ENCODE measurements at regions of chr1 and their contacts with region 1.

Region 1: GRCh38 chr1:167715157-167715999 is 6.4 kb upstream of the MPZL1 start:
- DNase-seq: peak; percentile 75 to 94 (median 78)
- ATAC-seq: peak; percentile 65
- H3K4me3 ChIP-seq: peak overlapping the region; percentile 66
- H3K27ac ChIP-seq: peak overlapping the region; percentile 99
- H3K4me1 ChIP-seq: peaks cover 21 to 22% of the 10 kb centered on the region in 2 experiments
- H3K27me3 ChIP-seq: no peaks in the 10 kb centered on the region
- CTCF ChIP-seq: peak; percentile 87 to 98 (median 97)
- EP300 ChIP-seq: peak; percentile 86
- POLR2A ChIP-seq: no peak
- RAD21 ChIP-seq: peak; percentile 48 to 60

Region 2: DNA sequence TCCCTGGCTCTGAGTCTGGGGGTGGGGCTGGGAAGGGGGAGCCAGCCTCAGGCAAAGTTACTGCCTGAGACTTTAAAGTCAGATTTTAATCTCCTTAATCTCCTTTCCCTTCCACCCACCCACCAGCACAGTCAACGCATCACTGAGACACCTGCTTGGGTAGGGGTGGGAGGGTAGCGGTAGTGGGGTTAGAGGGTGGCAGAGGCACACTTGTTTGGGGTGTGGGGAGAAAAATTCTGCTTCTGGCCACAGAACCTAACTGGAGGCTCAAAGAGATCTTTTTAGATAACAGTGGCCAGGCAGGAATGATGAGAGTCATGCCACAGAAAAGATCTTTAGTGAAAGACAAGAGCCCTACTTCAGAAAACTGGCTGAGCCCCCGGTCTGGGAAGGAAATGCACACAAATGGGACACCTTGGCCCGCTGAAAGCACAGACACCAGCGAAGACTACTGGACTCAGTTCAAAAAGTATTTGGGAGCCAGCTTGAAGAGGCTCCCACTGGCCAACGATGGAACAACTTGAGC is 241.1 kb before region 1 on chr1:
- CTCF ChIA-PET with region 1: no interaction called
- POLR2A ChIA-PET with region 1: no interaction called
- in situ Hi-C with region 1: no loop called
- intact Hi-C with region 1: no loop called
- DNase-seq: peak in 1 of 4 experiments; percentile 18
- ATAC-seq: peak; percentile 40; the same call in 2 of the 3 replicates
- H3K4me3 ChIP-seq: no peak overlapping the region
- H3K27ac ChIP-seq: no peak overlapping the region
- H3K4me1 ChIP-seq: peaks cover 0 to 7% of the 10 kb centered on the region in 2 experiments; a peak in 1 of 5 replicates
- H3K27me3 ChIP-seq: peaks cover 6 to 31% of the 10 kb centered on the region in 2 experiments; a peak in 4 of 5 replicates
- CTCF ChIP-seq: no peak
- EP300 ChIP-seq: no peak
- POLR2A ChIP-seq: no peak
- RAD21 ChIP-seq: no peak

Region 3: GRCh38 chr1:167663002-167663772 is 52.2 kb before region 1 on chr1:
- CTCF ChIA-PET with region 1: no interaction called
- POLR2A ChIA-PET with region 1: no interaction called
- in situ Hi-C with region 1: no loop called
- intact Hi-C with region 1: no loop called
- DNase-seq: peak in 2 of 4 experiments; percentile 54 to 63
- ATAC-seq: peak; percentile 67
- H3K4me3 ChIP-seq: no peak overlapping the region
- H3K27ac ChIP-seq: no peak overlapping the region
- H3K4me1 ChIP-seq: peaks cover 20% of the 10 kb centered on the region in 2 experiments
- H3K27me3 ChIP-seq: no peaks in the 10 kb centered on the region
- CTCF ChIP-seq: 0 out of 6 replicates have a peak, but pooled peaks of 1 of the 3 experiments have one; percentile 6
- EP300 ChIP-seq: no peak
- POLR2A ChIP-seq: no peak
- RAD21 ChIP-seq: peak in 1 of 2 experiments; percentile 28; a peak in 1 of 4 replicates

Region 4: DNA sequence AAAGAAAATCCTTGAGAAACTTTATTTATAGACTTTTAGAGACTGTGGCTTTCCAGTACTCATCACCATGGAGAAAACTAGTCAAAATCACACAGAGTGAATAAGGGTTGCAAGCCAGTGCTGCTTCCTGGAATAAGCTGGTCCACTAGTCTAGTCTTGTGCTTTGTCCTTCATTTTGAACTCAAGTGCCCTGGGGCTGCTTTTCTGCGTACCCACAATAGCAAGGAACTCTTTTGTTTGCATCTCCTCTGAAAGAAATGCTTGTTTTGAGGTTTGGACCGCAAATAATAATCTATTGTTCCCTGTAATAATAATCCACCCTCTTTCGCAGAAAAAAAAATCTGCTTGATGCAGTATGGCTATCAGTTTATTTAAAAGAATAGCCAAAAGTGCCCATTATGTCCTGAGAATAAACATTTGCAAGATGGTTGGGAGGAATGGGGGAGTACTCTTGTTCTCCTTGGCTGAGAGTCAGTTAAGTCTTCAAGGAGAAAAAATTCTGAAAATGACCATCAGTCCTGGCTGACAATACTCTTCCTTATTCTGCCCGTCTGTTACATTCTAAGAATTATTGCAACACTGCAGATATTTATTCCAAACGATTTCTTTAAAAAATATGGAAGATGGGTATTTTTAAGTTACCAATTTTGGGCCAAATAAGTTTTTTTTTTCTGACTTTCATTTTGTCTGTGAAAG is 48.3 kb after region 1 on chr1:
- CTCF ChIA-PET with region 1: no interaction called
- POLR2A ChIA-PET with region 1: interaction called, 9 read pairs
- in situ Hi-C with region 1: no loop called
- intact Hi-C with region 1: loop called (anchors 2 kb)
- DNase-seq: no peak
- ATAC-seq: no peak
- H3K4me3 ChIP-seq: no peak overlapping the region
- H3K27ac ChIP-seq: no peak overlapping the region
- H3K4me1 ChIP-seq: peaks cover 11 to 54% of the 10 kb centered on the region in 2 experiments
- H3K27me3 ChIP-seq: no peaks in the 10 kb centered on the region
- CTCF ChIP-seq: no peak
- EP300 ChIP-seq: no peak
- POLR2A ChIP-seq: no peak
- RAD21 ChIP-seq: no peak

Region 5: DNA sequence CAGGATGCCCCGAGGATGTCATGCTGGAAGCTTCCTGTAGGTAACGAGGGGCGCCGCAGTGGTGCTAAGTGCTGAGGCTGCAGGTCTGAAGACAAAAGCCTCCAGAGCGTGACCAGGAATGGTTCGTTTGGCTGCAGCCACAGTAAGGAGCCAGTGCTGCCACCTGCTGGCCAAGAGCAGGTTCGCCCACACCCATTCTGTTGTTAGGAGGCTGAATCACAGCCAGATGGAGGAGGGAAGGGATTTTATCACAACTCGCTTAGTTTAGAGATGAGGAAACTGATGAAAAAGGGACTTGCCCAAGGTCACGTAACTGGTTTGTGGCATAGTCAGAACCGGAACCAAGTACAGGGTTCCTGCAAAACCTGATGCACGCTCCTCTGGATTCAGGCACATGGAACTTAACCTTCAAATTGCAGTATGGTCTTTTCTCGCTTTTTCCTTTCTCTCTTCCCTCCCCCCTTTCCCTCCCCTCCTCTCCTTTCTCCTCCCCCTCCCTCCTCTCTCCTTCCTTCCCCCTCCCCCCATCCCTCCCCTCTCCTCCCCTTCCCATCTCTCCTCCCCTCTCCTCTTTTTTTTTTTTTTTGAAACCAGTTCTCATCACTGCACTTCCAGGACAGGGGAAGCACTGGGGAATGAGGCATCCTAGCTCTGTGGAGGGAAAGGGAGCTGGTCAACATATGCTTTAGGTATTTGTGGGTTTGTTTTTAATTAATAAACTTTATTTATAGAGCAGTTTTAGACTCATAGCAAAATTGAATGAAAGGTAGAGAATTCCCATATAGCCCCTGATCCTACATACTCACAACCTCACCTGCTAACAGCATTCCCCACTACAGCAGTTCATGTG is 88.2 kb after region 1 on chr1:
- CTCF ChIA-PET with region 1: interaction called, 3 read pairs
- POLR2A ChIA-PET with region 1: interaction called, 4 read pairs
- in situ Hi-C with region 1: loop called (anchors 5 kb)
- intact Hi-C with region 1: loop called (anchors 1 kb)
- DNase-seq: peak; percentile 92 to 96 (median 94)
- ATAC-seq: peak; percentile 98
- H3K4me3 ChIP-seq: no peak overlapping the region
- H3K27ac ChIP-seq: no peak overlapping the region
- H3K4me1 ChIP-seq: peaks cover 0 to 7% of the 10 kb centered on the region in 2 experiments; a peak in 4 of 5 replicates
- H3K27me3 ChIP-seq: no peaks in the 10 kb centered on the region
- CTCF ChIP-seq: peak; percentile 98 to 100 (median 98)
- EP300 ChIP-seq: peak; percentile 8; the same call in 1 of the 2 replicates
- POLR2A ChIP-seq: no peak
- RAD21 ChIP-seq: peak; percentile 91 to 95

Region 6: DNA sequence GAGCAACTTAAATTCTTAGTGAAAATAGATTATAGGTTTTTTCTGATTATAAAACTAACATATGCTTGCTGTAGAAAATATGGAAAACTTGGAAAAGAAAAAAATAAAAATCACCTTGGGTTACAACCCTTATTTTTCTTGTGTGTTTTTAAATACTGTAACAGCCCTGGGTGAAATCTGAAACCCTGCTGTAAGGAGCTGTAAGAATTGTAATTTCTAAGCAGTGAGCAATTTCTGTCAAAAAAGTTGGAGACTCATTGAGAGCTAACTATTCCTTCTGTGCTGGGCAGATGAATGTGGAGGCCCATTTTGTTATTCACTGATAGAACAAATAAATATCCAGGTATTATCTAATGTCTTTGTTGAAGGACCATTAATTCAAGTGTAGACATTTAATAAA is 156.0 kb after region 1 on chr1:
- CTCF ChIA-PET with region 1: no interaction called
- POLR2A ChIA-PET with region 1: interaction called, 7 read pairs
- in situ Hi-C with region 1: no loop called
- intact Hi-C with region 1: loop called (anchors 2 kb)
- DNase-seq: no peak
- ATAC-seq: no peak
- H3K4me3 ChIP-seq: no peak overlapping the region
- H3K27ac ChIP-seq: no peak overlapping the region
- H3K4me1 ChIP-seq: peaks cover 13 to 21% of the 10 kb centered on the region in 2 experiments
- H3K27me3 ChIP-seq: no peaks in the 10 kb centered on the region
- CTCF ChIP-seq: no peak
- EP300 ChIP-seq: no peak
- POLR2A ChIP-seq: no peak
- RAD21 ChIP-seq: no peak

Region 7: DNA sequence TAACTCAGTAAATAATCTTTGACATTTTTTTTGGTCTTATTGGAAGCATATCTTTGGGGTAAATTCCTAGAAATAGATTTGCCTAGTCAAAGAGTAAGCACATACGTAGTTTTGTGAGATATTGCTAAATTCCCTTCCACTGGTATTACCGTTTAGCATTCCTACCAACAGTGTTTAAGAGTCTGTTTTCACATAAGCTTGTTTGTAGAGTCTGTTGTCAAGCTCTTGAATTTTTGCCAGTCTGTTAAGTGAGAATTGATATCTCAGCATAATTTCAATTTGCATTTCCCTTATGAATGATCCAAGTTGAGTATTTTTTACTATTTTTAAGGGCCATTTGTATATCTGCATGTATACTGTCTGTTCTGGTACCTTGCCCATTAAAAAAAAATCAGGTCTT is 258.5 kb after region 1 on chr1:
- CTCF ChIA-PET with region 1: no interaction called
- POLR2A ChIA-PET with region 1: no interaction called
- in situ Hi-C with region 1: no loop called
- intact Hi-C with region 1: no loop called
- DNase-seq: no peak
- ATAC-seq: no peak; the same call in 2 of the 3 replicates
- H3K4me3 ChIP-seq: no peak overlapping the region
- H3K27ac ChIP-seq: peak overlapping the region; percentile 10; the same call in 1 of the 3 replicates
- H3K4me1 ChIP-seq: no peaks in the 10 kb centered on the region
- H3K27me3 ChIP-seq: no peaks in the 10 kb centered on the region
- CTCF ChIP-seq: no peak
- EP300 ChIP-seq: no peak
- POLR2A ChIP-seq: no peak
- RAD21 ChIP-seq: no peak